Right ventricle myocardium superior (tissue), 1 donor: ENCODE measurements at regions of chr15 and their contacts with region 1.

Region 1: DNA sequence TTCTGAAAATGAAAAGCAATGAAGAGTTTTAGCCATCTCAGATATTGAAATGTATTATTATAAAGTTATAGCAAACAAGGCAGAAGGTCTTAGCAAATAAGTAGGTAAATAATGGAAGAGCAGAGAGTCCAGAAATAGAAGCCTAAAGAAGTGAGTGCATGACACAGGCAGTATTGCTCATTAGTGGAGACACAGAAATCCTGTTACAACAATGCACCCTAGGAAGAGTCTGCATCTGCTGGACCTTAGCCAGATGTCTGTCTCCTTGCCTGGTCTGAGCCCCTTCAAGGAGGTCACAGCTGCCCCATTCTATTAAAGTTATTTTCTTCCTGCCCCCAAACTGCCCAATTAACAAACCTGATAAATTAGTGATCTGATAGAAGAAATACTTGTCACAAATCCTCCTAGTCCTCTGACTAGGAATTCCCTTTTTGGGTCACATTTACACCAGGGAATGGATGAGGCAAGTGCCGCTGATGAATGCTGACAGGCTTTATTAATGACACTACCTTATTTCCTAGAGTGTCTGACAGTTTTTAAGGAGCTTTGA is 51.9 kb downstream of the HOMER2 start:
- DNase-seq: no peak
- ATAC-seq: no peak

Region 2: DNA sequence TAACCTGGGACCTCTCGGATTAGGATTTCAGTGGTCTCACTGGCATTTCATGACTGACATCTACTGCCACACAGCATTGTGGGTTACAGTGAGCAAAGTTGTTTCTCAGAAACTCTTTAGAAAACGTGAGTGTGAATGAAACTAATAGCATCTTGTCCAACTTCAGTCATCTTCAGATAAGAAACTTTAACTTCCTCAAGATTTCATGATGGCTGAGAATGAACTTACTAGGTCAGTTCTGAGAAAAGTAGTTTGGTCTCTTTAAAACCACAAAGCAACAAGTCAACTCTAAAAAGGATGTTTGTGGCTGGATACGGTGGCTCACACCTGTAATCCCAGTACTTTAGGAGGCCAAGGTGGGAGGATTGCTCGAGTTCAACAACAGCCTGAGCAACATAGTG is 66.1 kb after region 1 on chr15:
- intact Hi-C with region 1: loop called (anchors 10 kb)
- DNase-seq: no peak
- ATAC-seq: no peak